Activated naive CD4-positive, alpha-beta T cell treated with anti-CD3 and anti-CD28 coated beads for 36 hours (primary cell): ENCODE measurements at regions of chr5 and their contacts with region 1.

Region 1: DNA sequence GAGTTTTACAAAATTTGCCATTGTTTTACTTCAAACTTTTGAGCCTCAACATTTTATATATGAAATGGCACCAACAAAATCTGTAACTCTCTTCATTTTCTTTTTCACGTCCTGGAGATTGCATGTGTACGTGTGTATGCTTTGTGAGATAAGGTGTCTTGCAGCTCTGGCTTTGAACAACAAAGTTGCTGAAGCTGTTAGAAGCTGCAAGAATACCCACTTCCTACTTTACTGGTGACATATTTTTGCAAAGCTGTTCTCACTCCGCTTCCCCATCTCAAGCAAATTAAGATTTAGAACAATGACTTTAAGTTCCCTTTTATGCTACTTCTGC is 41.8 kb downstream of the FYB1 start:
- DNase-seq: no peak
- H3K4me3 Mint-ChIP-seq: peak overlapping the region; percentile 75
- H3K27ac Mint-ChIP-seq: peak overlapping the region; percentile 92
- H3K4me1 Mint-ChIP-seq: peaks cover 95% of the 10 kb centered on the region
- H3K27me3 Mint-ChIP-seq: no peaks in the 10 kb centered on the region

Region 2: DNA sequence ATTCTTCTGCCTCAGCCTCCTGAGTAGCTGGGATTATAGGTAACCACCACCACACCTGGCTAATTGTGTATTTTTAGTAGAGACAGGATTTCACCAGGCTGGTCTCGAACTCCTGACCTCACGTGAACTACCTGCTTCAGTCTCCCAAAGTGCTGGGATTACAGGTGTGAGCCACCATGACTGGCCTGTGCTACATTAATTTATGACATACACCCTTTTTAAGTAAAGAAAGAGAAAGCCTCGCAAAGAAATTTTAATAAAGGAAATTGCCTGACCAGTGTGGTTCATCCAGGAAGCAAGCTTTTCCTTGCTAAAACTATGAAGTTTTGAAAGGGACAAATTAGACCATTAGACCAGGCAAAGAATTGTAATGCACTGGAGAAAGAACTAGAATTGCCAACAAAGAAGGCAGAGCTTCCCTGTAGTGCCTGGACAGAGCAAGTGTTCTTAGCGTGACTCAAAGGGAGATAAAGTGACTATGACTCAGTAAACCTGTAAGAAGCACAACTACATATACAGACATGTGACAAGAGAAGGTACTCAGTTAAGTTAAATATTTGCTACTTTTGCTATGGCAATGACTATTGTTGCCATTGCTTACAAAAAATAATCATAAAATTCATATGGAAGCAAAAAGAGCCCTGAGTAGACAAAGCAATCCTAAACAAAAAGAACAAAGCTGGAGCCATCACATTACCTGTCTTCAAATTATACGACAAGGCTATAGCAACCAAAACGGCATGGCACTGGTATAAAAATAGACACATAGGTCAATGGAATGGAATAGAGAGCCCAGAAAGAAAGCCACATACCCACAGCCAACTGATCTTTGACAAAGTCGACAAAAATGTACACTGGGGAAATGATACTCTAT is 12.8 kb before region 1 on chr5:
- CTCF ChIA-PET with region 1: interaction called, 11 read pairs
- intact Hi-C with region 1: loop called (anchors 1 kb)
- DNase-seq: peak; percentile 51
- H3K4me3 Mint-ChIP-seq: peak overlapping the region; percentile 74
- H3K27ac Mint-ChIP-seq: peak overlapping the region; percentile 96
- H3K4me1 Mint-ChIP-seq: peaks cover 86% of the 10 kb centered on the region
- H3K27me3 Mint-ChIP-seq: no peaks in the 10 kb centered on the region

Region 3: DNA sequence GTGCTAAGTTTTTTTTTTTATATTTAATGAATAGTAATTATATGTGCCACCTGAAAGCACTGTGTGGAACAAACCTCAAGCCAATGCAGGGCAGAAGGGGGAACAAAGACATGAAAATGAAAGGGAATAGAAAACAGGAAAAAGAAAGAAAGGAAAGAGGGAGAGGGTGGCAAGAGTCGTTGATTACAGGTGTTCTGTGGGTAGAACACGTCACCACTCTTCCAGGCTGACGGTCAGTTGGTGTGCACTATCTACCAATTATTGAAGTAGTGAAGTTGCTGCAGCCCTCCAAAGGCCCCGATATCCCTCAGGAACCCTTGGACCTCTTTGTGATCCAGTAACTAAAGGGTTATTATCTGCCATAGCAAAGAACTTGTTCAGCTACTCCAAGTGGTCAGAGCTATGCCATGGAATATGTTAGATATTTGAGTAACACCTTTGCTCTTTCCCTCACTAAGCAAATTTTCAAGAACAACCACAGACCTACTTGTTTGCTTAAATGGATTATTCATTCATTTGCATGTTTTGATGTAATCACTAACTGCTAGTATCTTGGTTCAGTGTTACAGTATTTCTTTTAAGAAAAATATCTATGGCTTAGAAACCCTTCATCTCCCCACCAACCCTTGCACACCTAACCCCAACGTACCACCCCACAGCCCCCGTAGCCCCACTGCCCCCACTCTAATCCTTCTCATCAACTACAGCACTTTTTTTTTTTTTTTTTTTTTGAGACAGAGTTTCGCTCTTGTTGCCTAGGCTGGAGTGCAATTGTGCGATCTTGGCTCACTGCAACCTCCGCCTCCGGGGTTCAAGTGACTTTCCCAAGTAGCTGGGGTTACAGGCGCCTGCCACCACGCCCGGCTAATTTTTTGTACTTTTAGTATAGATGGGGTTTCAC is 10.5 kb after region 1 on chr5:
- CTCF ChIA-PET with region 1: interaction called, 22 read pairs
- intact Hi-C with region 1: loop called (anchors 1 kb)
- DNase-seq: peak; percentile 51
- H3K4me3 Mint-ChIP-seq: peak overlapping the region; percentile 71
- H3K27ac Mint-ChIP-seq: peak overlapping the region; percentile 98
- H3K4me1 Mint-ChIP-seq: peaks cover 83% of the 10 kb centered on the region
- H3K27me3 Mint-ChIP-seq: no peaks in the 10 kb centered on the region

Region 4: GRCh38 chr5:39194466-39195136 is 17.0 kb after region 1 on chr5:
- CTCF ChIA-PET with region 1: interaction called, 22 read pairs
- intact Hi-C with region 1: loop called (anchors 2 kb)
- DNase-seq: no peak
- H3K4me3 Mint-ChIP-seq: peak overlapping the region; percentile 76
- H3K27ac Mint-ChIP-seq: peak overlapping the region; percentile 93
- H3K4me1 Mint-ChIP-seq: peaks cover 62% of the 10 kb centered on the region
- H3K27me3 Mint-ChIP-seq: no peaks in the 10 kb centered on the region

Region 5: DNA sequence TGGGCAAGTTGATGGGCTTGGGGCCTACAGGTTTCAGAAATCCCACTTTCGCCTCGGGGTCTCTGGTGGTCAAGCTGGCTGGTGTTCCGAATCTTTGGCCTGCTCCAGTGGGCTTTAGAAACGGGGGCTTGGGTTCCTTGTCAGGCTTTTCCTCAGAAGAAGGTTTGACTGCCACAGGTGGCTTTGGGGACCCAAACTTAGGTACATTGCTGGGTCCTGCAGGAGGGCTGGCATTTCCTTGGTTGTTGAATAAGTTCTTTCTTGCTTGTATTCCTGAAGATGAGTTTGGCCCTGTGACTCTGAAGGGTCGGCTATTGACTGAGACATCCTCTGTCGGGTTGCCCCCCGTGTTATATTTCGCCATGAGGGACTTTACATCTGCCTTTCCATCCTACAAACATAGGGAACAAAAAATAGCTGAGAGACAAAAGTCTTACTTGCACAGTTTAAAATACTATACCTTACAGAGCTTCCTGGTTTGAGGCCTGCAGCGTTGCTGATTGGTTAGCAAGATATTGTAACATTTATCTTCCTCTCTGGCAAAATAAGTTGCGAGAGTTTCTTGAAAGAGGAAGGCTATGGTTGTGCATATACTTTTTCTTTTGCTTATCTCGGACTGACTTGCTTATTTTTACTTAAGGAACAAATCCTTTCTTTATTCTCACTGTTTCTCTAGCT is 25.1 kb after region 1 on chr5:
- CTCF ChIA-PET with region 1: interaction called, 7 read pairs
- intact Hi-C with region 1: loop called (anchors 1 kb)
- DNase-seq: peak; percentile 55
- H3K4me3 Mint-ChIP-seq: peak overlapping the region; percentile 83
- H3K27ac Mint-ChIP-seq: peak overlapping the region; percentile 99
- H3K4me1 Mint-ChIP-seq: peaks cover 37% of the 10 kb centered on the region
- H3K27me3 Mint-ChIP-seq: no peaks in the 10 kb centered on the region

Region 6: GRCh38 chr5:39209924-39210323 is 32.3 kb after region 1 on chr5:
- CTCF ChIA-PET with region 1: interaction called, 7 read pairs
- intact Hi-C with region 1: loop called (anchors 1 kb)
- DNase-seq: peak; percentile 83
- H3K4me3 Mint-ChIP-seq: peak overlapping the region; percentile 80
- H3K27ac Mint-ChIP-seq: peak overlapping the region; percentile 99
- H3K4me1 Mint-ChIP-seq: peaks cover 78% of the 10 kb centered on the region
- H3K27me3 Mint-ChIP-seq: no peaks in the 10 kb centered on the region